Activated B cell treated with CpG ODN at 0.5 μM for 24 hours (primary cell): ENCODE measurements at regions of chr1 and their contacts with region 1.

Region 1: GRCh38 chr1:121458291-121459048 is 273.7 kb downstream of the SRGAP2C start:
- DNase-seq: no peak
- ATAC-seq: peak; percentile 97
- H3K4me3 Mint-ChIP-seq: peak overlapping the region; percentile 64
- H3K27ac Mint-ChIP-seq: peak overlapping the region; percentile 85
- H3K4me1 Mint-ChIP-seq: peaks cover 13% of the 10 kb centered on the region
- H3K27me3 Mint-ChIP-seq: no peaks in the 10 kb centered on the region
- CTCF ChIP-seq: no peak

Region 2: GRCh38 chr1:121408354-121408753 is 50.1 kb before region 1 on chr1:
- CTCF ChIA-PET with region 1: no interaction called
- POLR2A ChIA-PET with region 1: no interaction called
- intact Hi-C with region 1: loop called (anchors 10 kb)
- DNase-seq: no peak
- ATAC-seq: peak; percentile 60
- H3K4me3 Mint-ChIP-seq: no peak overlapping the region
- H3K27ac Mint-ChIP-seq: peak overlapping the region; percentile 42
- H3K4me1 Mint-ChIP-seq: peaks cover 12% of the 10 kb centered on the region
- H3K27me3 Mint-ChIP-seq: no peaks in the 10 kb centered on the region
- CTCF ChIP-seq: no peak

Region 3: DNA sequence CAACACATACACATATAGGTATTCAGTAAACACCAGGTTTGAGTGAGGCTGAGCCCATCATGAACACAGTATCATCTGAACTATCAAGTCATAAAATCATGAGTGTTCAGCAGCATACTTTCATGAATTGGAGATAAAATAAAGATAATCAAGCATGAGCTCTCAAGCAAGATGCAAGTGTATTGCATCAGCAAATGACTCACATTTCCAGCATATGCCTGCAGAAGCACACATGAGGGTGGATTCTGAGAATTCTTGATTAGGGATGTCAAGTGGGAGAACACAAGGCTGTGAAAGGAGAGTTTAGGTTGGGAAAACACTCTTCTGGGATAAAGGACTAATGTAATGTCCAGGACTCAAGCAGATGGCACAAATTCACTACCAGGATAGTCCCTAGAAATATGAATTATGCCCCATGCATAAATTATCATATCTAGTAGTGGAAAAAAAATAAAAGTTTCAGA is 25.5 kb after region 1 on chr1:
- CTCF ChIA-PET with region 1: no interaction called
- POLR2A ChIA-PET with region 1: no interaction called
- intact Hi-C with region 1: no loop called
- DNase-seq: no peak
- ATAC-seq: no peak
- H3K4me3 Mint-ChIP-seq: no peak overlapping the region
- H3K27ac Mint-ChIP-seq: no peak overlapping the region
- H3K4me1 Mint-ChIP-seq: peaks cover 5% of the 10 kb centered on the region
- H3K27me3 Mint-ChIP-seq: no peaks in the 10 kb centered on the region
- CTCF ChIP-seq: no peak